ENCODE measurements at regions of chr9 and their contacts with region 1.

Region 1: GRCh38 chr9:72364679-72365524 is at the start of gene ZFAND5:
- DNase-seq: peak; percentile 91 to 98
- H3K4me3 ChIP-seq: peak within 1 kb of the TSS; percentile 96
- H3K27ac ChIP-seq: peak within 1 kb of the TSS; percentile 100
- H3K4me1 ChIP-seq: peaks cover 38% of the 10 kb centered on the region
- H3K27me3 ChIP-seq: no peaks in the 10 kb centered on the region
- CTCF ChIP-seq: no peak
- total RNA-seq, gene ZFAND5: 217 and 227 TPM in 2 replicates

Region 2: DNA sequence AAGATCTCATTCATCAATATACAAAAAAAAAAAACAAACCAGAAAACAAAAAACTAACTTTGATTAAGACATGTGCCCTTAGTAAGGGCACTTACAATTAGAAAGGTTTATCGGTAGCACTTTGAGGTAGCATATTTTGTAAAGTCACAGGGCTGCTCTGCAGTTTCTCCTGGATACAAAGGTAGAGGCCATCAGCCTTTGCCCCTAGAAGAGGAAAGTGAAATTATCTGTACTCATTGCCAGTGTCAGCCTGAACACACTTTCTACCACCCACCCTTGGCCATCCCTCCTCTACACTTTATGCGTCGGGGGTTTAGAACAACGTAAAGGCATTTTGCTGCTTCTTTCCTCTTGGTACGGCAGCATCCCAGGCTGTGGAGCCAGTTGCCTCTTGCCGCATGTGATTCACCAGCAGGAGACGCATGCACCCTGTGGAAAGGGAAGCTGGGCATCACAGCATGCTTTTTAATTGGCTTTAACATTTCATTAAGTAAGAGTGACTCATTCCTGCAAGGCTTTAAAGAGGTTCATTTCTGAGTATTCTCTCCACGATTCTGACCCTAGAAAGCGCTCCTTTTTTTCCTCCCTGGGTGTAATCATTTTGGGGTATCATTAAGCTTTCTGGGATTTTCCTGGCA is 681.2 kb before region 1 on chr9:
- CTCF ChIA-PET with region 1: no interaction called
- POLR2A ChIA-PET with region 1: interaction called, 10 read pairs
- intact Hi-C with region 1: no loop called
- DNase-seq: no peak
- H3K4me3 ChIP-seq: no peak overlapping the region
- H3K27ac ChIP-seq: no peak overlapping the region
- H3K4me1 ChIP-seq: peaks cover 88% of the 10 kb centered on the region
- H3K27me3 ChIP-seq: no peaks in the 10 kb centered on the region
- CTCF ChIP-seq: no peak

Region 3: GRCh38 chr9:71703172-71703872 is 661.6 kb before region 1 on chr9:
- CTCF ChIA-PET with region 1: no interaction called
- POLR2A ChIA-PET with region 1: no interaction called
- intact Hi-C with region 1: no loop called
- DNase-seq: no peak
- H3K4me3 ChIP-seq: no peak overlapping the region
- H3K27ac ChIP-seq: no peak overlapping the region
- H3K4me1 ChIP-seq: no peaks in the 10 kb centered on the region
- H3K27me3 ChIP-seq: no peaks in the 10 kb centered on the region
- CTCF ChIP-seq: no peak

Region 4: DNA sequence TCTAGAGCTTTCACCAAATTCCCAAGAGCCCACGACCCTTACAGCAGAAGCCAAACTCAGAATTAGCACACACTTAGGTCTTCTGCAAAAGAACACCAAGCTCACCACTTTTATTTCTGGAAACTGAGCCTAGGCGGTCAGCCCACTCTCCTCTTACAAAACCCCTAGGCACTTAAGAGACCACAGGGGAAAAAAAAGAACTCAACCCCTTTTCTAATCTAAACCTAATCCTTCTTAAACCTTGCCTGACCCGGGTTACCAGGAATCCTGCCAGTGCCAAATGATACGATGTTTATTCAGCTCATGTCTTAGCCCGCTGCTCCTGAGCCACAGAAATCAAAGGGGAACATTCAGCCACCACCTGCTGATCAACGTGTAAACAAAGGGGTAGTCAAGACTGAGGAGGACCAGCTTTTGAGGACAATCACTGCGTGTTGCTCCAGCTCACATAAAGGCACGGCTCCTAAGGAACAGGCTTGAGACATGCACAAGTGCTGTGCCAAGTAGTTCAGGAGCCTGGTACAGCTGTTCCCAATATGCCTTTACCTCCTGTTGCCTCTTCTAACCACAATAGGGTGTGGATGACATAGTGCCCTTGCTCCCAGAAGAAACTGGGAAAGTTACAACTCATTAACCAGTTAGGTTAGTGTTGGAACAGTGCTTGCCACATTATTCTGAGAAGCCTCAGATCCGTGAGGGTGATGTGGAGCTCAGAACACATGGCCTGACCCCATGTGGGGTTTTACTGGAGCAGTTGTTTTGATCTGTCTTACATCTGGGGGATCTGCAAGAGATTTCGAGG is 49.2 kb before region 1 on chr9:
- CTCF ChIA-PET with region 1: no interaction called
- POLR2A ChIA-PET with region 1: interaction called, 6 read pairs
- intact Hi-C with region 1: loop called (anchors 2 kb)
- DNase-seq: peak; percentile 68 to 92
- H3K4me3 ChIP-seq: peak overlapping the region; percentile 36; the same call in 1 of the 2 replicates
- H3K27ac ChIP-seq: peak overlapping the region; percentile 70
- H3K4me1 ChIP-seq: peaks cover 39% of the 10 kb centered on the region
- H3K27me3 ChIP-seq: no peaks in the 10 kb centered on the region
- CTCF ChIP-seq: no peak

Region 5: DNA sequence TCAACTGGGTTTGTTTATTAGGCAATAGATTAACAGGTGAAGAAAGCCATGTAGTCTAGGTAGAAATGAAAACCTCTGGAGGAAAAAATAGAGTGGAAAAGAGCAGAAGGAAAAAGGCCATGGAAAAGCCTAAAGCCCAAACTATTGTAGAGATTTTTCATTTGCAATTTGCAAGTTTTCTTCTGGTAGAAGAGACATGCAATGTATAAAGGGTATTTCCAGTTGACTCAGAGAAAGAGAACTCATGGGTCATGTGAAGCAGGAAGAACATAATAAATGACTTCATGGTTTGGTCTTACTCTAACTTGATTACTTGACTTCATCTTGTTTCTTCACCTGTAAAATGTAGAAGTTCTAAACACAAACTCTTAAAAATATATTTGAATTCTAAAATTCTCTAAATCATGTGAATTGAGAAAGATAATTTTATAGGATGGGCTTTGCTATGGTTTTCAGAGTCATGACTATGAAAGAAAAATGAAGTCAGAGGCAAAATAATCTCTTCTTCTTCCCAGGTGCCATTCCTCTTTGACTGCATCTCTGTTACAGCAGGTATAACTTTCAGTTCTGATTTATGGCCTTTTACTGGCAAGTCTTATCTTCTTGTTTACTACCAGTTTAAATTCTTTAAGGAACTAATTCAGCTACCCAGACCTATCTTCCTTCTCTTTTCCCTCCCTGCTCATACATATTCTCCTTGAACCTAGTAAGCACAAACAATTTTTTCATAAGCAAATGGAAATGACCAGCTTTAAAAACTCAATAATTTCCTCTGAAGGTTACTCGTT is 108.8 kb after region 1 on chr9:
- CTCF ChIA-PET with region 1: interaction called, 6 read pairs
- POLR2A ChIA-PET with region 1: interaction called, 32 read pairs
- intact Hi-C with region 1: loop called (anchors 1 kb)
- DNase-seq: no peak
- H3K4me3 ChIP-seq: no peak overlapping the region
- H3K27ac ChIP-seq: no peak overlapping the region
- H3K4me1 ChIP-seq: peaks cover 31% of the 10 kb centered on the region
- H3K27me3 ChIP-seq: no peaks in the 10 kb centered on the region
- CTCF ChIP-seq: no peak

Region 6: GRCh38 chr9:72540348-72540873 is 175.5 kb after region 1 on chr9:
- CTCF ChIA-PET with region 1: interaction called, 5 read pairs
- POLR2A ChIA-PET with region 1: interaction called, 6 read pairs
- intact Hi-C with region 1: loop called (anchors 1 kb)
- DNase-seq: peak; percentile 43 to 60
- H3K4me3 ChIP-seq: no peak overlapping the region
- H3K27ac ChIP-seq: peak overlapping the region; percentile 42
- H3K4me1 ChIP-seq: peaks cover 54% of the 10 kb centered on the region
- H3K27me3 ChIP-seq: no peaks in the 10 kb centered on the region
- CTCF ChIP-seq: no peak

Region 7: GRCh38 chr9:72586388-72587130 is 221.7 kb after region 1 on chr9:
- CTCF ChIA-PET with region 1: no interaction called
- POLR2A ChIA-PET with region 1: interaction called, 10 read pairs
- intact Hi-C with region 1: no loop called
- DNase-seq: peak; percentile 48 to 89
- H3K4me3 ChIP-seq: no peak overlapping the region
- H3K27ac ChIP-seq: peak overlapping the region; percentile 92
- H3K4me1 ChIP-seq: peaks cover 51% of the 10 kb centered on the region
- H3K27me3 ChIP-seq: no peaks in the 10 kb centered on the region
- CTCF ChIP-seq: peak; percentile 41

Region 8: GRCh38 chr9:72827950-72828731 is 463.2 kb after region 1 on chr9:
- CTCF ChIA-PET with region 1: no interaction called
- POLR2A ChIA-PET with region 1: no interaction called
- intact Hi-C with region 1: loop called (anchors 5 kb)
- DNase-seq: peak; percentile 16 to 97
- H3K4me3 ChIP-seq: no peak overlapping the region
- H3K27ac ChIP-seq: peak overlapping the region; percentile 92
- H3K4me1 ChIP-seq: peaks cover 31% of the 10 kb centered on the region
- H3K27me3 ChIP-seq: no peaks in the 10 kb centered on the region
- CTCF ChIP-seq: no peak

Measured in PC-9 (cell line).